ENCODE measurements at regions of chr3 and their contacts with region 1.

Region 1: DNA sequence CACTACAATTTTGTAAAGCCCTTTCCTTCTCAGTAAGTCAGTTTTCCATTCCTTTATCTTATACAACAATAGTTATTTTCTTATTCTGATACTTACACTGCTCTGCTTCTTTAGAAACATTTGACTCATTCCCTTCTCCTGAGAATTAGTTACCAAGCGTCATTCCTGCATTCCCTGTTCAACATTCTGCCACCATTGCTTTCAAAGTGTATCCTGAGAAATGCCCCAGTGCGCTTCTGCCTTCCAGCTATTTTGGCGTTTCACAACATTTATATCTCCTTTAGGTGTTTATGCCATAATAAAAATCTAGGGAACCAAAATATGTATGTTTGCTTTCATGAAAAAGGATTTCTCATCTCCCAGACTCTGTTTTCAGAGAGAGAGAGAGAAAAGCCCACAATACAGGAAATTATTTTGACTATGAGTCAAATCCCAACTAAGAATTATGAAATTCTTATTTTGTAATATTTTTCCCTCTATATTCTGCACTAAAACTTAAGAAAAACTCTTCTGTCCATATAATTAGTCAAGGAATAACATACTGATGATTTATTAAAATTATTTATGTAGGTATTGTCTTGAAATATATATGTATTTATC is 118.2 kb upstream of the RAP2B start:
- DNase-seq: no peak
- H3K4me3 Mint-ChIP-seq: no peak overlapping the region
- H3K27ac Mint-ChIP-seq: no peak overlapping the region
- H3K4me1 Mint-ChIP-seq: peaks cover 12% of the 10 kb centered on the region
- H3K27me3 Mint-ChIP-seq: no peaks in the 10 kb centered on the region

Region 2: GRCh38 chr3:153221748-153222162 is 177.9 kb after region 1 on chr3:
- intact Hi-C with region 1: loop called (anchors 5 kb)
- DNase-seq: peak; percentile 75
- H3K4me3 Mint-ChIP-seq: peak overlapping the region; percentile 72
- H3K27ac Mint-ChIP-seq: peak overlapping the region; percentile 90
- H3K4me1 Mint-ChIP-seq: peaks cover 47% of the 10 kb centered on the region
- H3K27me3 Mint-ChIP-seq: no peaks in the 10 kb centered on the region

Region 3: DNA sequence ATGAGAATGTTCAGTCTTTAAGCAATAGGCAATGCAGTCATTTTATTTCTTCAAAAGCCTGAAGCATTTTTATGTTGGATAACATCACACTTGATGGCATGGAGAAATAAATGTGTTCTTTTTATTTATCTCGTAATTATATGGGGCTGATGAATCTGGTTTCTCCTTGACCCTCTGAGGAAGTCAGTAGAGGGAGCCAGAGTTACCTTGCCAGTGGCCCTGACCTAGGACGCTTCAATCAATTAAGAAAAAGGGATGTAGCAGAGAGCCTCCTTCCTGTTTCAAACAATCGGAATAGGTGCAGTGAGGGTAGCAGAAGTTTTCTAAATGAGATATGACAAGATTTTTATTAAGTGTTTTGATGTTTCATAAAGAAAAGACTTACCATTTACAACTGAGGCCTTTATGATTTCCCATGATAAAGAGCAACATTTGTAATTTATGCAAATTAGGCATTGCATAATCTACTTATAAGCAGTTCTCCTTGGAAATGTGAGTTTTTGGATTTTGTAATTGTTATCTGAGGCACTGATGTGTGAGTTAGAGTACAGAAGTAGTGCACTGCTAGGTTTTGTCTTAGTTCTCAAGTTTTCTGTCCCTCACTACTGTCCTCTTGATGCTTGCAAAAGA is 247.3 kb after region 1 on chr3:
- intact Hi-C with region 1: loop called (anchors 2 kb)
- DNase-seq: no peak
- H3K4me3 Mint-ChIP-seq: no peak overlapping the region
- H3K27ac Mint-ChIP-seq: no peak overlapping the region
- H3K4me1 Mint-ChIP-seq: peaks cover 41% of the 10 kb centered on the region
- H3K27me3 Mint-ChIP-seq: no peaks in the 10 kb centered on the region

Region 4: DNA sequence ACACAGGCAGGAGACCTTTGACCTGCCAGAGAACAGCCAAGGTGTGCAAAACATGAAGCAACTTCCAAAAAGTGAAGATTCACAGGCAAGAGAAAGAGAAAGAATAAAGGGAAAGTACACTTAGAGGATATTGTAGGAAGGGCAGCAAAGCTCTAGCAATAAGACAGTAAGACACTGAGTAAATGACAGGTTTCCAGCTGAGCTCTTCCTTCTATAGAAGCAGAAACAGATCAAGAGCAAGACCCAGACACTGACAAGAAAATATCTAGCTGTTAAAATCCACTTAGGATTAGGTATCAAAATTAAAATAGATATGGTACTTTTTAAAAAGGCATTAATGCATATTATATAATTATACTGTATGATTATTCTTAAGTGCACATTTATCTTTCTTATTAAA is 451.6 kb after region 1 on chr3:
- intact Hi-C with region 1: loop called (anchors 10 kb)
- DNase-seq: no peak
- H3K4me3 Mint-ChIP-seq: no peak overlapping the region
- H3K27ac Mint-ChIP-seq: no peak overlapping the region
- H3K4me1 Mint-ChIP-seq: no peaks in the 10 kb centered on the region
- H3K27me3 Mint-ChIP-seq: no peaks in the 10 kb centered on the region

Region 5: GRCh38 chr3:153595186-153595815 is 551.5 kb after region 1 on chr3:
- intact Hi-C with region 1: loop called (anchors 1 kb)
- DNase-seq: no peak
- H3K4me3 Mint-ChIP-seq: no peak overlapping the region
- H3K27ac Mint-ChIP-seq: no peak overlapping the region
- H3K4me1 Mint-ChIP-seq: no peaks in the 10 kb centered on the region
- H3K27me3 Mint-ChIP-seq: no peaks in the 10 kb centered on the region

Region 6: GRCh38 chr3:153768561-153769469 is 725.0 kb after region 1 on chr3:
- intact Hi-C with region 1: loop called (anchors 1 kb)
- DNase-seq: peak; percentile 35
- H3K4me3 Mint-ChIP-seq: no peak overlapping the region
- H3K27ac Mint-ChIP-seq: no peak overlapping the region
- H3K4me1 Mint-ChIP-seq: no peaks in the 10 kb centered on the region
- H3K27me3 Mint-ChIP-seq: peaks cover 17% of the 10 kb centered on the region

Region 7: DNA sequence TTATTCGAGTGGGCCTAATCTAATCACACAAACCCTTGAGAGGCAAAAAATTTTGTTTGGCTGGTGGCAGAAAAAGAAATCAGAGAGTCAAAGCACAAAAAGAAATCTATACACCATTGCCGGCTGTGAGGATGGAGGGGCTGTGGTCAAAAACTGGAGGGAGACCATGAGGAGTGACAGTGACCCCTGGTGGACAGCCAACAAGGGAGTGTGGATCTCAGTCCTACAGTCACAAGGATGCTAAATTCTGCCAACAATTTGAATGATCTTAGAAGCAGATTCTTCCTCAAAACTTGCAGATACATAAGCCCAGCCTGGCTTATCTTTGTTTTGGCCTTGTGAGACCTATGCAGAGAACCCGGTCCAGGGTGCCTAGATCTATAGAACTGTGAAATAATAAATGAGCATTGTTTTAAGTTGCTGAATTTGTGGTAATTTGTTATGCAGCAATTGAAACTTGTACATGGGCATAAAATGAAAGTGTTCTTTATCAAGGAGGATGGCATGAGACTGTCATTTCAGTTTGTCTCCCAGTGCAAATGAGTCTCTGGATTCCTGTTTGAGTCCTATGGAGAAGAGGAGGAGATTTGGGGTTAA is 974.4 kb after region 1 on chr3:
- intact Hi-C with region 1: loop called (anchors 5 kb)
- DNase-seq: no peak
- H3K4me3 Mint-ChIP-seq: no peak overlapping the region
- H3K27ac Mint-ChIP-seq: no peak overlapping the region
- H3K4me1 Mint-ChIP-seq: no peaks in the 10 kb centered on the region
- H3K27me3 Mint-ChIP-seq: no peaks in the 10 kb centered on the region